B cell (primary cell): ENCODE measurements at regions of chr2 and their contacts with region 1.

Region 1: DNA sequence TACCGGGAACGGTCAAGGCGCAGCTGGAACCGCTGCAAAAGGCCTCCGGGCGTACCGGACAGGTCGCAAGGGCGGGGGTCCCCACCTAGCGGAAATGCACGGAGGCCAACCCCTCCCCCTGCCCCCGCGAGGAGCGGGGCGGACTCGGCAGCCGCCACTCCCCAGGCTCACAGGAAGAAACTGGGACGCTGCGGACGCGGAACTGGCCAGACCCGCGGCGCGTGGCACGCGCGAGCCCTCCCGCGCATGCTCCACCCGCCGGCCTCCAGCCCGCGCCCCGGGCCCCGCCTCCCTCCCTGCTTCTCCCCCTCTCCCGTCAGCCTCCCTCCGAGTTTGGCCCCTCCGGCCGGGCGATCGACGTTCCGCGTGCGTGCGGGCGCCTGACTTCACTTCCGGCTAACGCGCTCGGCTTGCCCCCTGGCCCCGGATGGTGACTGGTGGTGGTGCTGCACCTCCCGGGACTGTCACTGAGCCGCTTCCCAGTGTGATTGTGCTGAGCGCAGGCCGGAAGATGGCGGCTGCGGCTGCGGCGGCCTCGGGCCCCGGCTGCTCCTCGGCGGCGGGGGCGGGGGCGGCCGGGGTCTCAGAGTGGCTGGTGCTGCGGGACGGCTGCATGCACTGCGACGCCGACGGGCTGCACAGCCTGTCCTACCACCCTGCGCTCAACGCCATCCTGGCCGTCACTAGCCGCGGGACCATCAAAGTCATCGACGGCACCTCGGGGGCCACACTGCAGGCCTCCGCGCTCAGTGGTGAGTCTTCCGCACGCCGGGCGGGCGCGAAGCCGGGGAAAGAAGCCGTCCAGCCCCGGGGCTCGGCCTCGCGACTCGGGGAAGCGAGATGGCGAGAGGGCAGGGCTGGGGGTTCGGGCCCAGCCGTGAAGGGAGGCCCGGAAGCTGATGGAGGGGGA is at the start of gene BIRC6:
- DNase-seq: peak; percentile 97
- ATAC-seq: peak; percentile 86
- H3K4me3 ChIP-seq: peak within 1 kb of the TSS; percentile 63 to 98 (median 97)
- H3K4me3 Mint-ChIP-seq: peak within 1 kb of the TSS; percentile 91
- H3K27ac ChIP-seq: peak within 1 kb of the TSS; percentile 91 to 92
- H3K27ac Mint-ChIP-seq: peak within 1 kb of the TSS; percentile 98
- H3K4me1 ChIP-seq: peaks cover 34 to 36% of the 10 kb centered on the region in 2 donors
- H3K4me1 Mint-ChIP-seq: peaks cover 40% of the 10 kb centered on the region
- H3K27me3 ChIP-seq: no peaks in the 10 kb centered on the region
- H3K27me3 Mint-ChIP-seq: no peaks in the 10 kb centered on the region
- CTCF ChIP-seq: no peak
- total RNA-seq, gene BIRC6: 166 and 196 TPM in 2 replicates

Region 2: DNA sequence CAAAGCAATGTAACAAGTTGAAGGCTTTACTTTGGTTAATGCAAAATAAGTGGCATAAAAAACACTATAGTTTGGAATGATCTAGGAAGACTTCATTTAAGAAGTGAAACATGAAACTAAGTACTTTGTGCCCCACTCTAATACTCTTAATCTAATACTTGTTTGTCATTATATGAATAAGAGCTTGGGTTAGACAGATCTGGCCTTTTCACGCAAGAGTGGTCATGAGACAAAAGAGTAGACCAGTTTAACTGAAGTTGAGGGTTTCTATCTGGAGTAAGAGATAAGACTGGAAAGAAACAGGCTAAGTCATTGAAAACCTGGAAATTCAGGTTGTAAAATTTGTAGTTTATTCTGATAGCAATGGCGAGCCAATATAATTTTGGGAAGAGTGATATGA is 188.5 kb before region 1 on chr2:
- CTCF ChIA-PET with region 1: no interaction called
- POLR2A ChIA-PET with region 1: no interaction called
- intact Hi-C with region 1: loop called (anchors 1 kb)
- DNase-seq: no peak
- ATAC-seq: no peak
- H3K4me3 ChIP-seq: no peak overlapping the region
- H3K4me3 Mint-ChIP-seq: no peak overlapping the region
- H3K27ac ChIP-seq: no peak overlapping the region
- H3K27ac Mint-ChIP-seq: no peak overlapping the region
- H3K4me1 ChIP-seq: peaks cover 12 to 18% of the 10 kb centered on the region in 2 donors
- H3K4me1 Mint-ChIP-seq: peaks cover 30% of the 10 kb centered on the region
- H3K27me3 ChIP-seq: no peaks in the 10 kb centered on the region
- H3K27me3 Mint-ChIP-seq: no peaks in the 10 kb centered on the region
- CTCF ChIP-seq: no peak

Region 3: DNA sequence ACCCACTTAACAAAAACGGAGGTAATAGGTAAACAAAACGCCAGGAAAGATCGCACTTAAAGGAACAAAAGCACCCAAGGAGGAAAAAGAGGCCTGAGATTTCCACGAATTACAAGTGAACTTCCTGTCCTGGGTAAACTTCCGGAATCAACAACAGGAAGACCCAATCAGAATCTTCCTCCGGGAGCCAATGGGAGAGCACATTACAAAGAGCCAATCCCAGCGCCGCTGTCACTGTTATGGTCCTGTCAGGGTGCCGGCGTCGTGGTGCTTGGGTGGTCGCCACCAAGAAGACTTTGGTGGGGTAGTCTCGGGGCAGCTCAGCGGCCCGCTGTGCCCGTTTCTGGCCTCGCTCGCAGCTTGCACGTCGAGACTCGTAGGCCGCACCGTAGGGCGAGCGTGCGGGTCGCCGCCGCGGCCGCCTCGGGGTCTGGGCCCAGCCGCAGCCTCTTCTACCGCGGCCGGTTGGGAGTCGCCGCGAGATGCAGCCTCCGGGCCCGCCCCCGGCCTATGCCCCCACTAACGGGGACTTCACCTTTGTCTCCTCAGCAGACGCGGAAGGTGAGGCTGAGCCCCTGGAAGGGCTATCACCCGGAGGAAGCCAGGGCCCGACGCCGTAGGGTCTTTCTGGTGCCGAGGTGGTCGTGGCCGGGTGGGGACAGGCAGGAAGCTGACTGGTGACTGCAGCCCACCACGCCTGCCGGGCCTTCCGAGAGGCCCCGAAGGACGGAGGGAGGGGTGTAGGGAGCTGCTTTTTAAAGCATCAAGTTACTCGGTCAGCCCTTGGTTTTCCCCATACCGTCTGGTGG is 79.1 kb before region 1 on chr2 and contains the start of gene YIPF4:
- CTCF ChIA-PET with region 1: no interaction called
- POLR2A ChIA-PET with region 1: no interaction called
- intact Hi-C with region 1: loop called (anchors 1 kb)
- DNase-seq: peak; percentile 96
- ATAC-seq: peak; percentile 98
- H3K4me3 ChIP-seq: peak within 1 kb of the TSS; percentile 70 to 98 (median 94)
- H3K4me3 Mint-ChIP-seq: peak within 1 kb of the TSS; percentile 91
- H3K27ac ChIP-seq: peak within 1 kb of the TSS; percentile 66 to 95
- H3K27ac Mint-ChIP-seq: peak within 1 kb of the TSS; percentile 97
- H3K4me1 ChIP-seq: peaks cover 12 to 20% of the 10 kb centered on the region in 2 donors
- H3K4me1 Mint-ChIP-seq: peaks cover 23% of the 10 kb centered on the region
- H3K27me3 ChIP-seq: no peaks in the 10 kb centered on the region
- H3K27me3 Mint-ChIP-seq: peaks cover 12% of the 10 kb centered on the region
- CTCF ChIP-seq: no peak
- total RNA-seq, gene YIPF4: 38.0 and 42.4 TPM in 2 replicates

Region 4: DNA sequence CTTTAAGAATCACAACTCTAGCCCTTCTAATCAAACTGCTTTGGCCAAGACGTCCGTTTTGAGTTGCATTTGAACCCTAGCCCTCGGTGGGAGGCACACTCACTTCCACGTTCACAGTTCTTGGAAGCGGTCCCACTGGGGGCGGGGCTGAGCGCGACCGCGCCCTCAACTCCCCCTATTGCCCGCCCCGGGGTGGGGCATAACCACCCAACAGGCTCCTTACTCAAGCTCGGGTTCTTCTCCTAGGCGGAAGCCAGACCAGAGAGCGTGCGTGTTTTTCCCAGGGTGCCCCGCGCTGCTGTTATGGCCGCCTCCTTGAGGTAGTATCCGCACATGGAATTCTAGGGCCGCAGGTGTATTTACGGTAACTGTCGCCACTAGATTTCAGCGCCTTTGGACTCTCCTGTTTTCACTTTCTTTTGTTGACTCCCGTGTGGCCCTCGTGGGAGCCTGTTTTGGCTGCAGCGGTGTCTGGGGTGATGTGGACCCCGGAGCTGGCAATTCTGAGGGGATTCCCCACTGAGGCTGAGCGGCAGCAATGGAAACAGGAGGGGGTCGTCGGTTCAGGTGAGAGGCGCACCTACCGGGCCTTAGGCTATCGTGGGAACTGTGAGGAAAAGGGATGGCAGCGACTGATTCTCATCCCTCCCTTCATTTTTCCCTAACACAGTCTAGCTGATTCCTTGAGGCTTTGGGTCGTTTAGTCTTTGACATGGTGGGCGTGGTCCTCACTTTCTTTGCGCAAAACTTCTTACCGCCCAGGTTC is 271.0 kb after region 1 on chr2 and contains the start of gene TTC27:
- CTCF ChIA-PET with region 1: no interaction called
- POLR2A ChIA-PET with region 1: no interaction called
- intact Hi-C with region 1: loop called (anchors 1 kb)
- DNase-seq: peak; percentile 94
- ATAC-seq: peak; percentile 100
- H3K4me3 ChIP-seq: peak within 1 kb of the TSS; percentile 75 to 97 (median 80)
- H3K4me3 Mint-ChIP-seq: peak within 1 kb of the TSS; percentile 96
- H3K27ac ChIP-seq: peak within 1 kb of the TSS; percentile 39 to 66
- H3K27ac Mint-ChIP-seq: peak within 1 kb of the TSS; percentile 82
- H3K4me1 ChIP-seq: peaks cover 4 to 17% of the 10 kb centered on the region in 2 donors
- H3K4me1 Mint-ChIP-seq: peaks cover 18% of the 10 kb centered on the region
- H3K27me3 ChIP-seq: no peaks in the 10 kb centered on the region
- H3K27me3 Mint-ChIP-seq: no peaks in the 10 kb centered on the region
- CTCF ChIP-seq: no peak
- total RNA-seq, gene TTC27: 25.8 and 28.5 TPM in 2 replicates